ENCODE measurements at regions of chr6 and their contacts with region 1.

Region 1: DNA sequence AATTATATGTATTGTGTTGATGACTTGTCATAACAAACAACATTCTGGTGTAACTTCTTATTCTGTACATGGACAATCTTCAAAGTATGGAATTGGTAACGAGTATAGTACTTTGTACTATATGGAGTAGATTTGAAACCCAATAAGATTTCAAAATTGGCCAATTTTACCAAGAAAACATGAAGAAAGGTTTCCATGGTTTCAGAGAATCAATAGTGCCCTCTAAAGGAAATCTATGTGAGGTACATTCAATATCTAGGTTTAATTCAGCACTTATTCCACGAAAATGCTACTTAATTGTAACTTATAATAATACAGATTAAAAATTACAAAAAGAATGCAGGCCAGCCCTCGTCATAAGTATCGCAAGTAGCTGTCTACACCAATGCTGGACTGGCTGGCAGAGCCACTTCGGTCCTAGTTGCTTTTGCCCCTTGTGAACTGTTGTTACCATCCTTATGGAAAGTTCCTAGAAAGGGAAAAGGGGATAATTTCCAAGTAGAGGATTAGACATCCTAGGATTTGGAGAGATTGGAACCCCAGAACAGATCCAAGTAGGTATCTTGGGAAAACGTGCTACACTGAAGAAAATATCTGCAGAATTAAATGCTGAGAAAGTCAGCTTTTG is 70.9 kb downstream of the LCA5 start:
- DNase-seq: no peak
- H3K4me3 ChIP-seq: no peak overlapping the region
- H3K27ac ChIP-seq: no peak overlapping the region
- H3K4me1 ChIP-seq: no peaks in the 10 kb centered on the region
- H3K27me3 ChIP-seq: no peaks in the 10 kb centered on the region
- CTCF ChIP-seq: peak in 2 of 3 experiments; percentile 29 to 39; a peak in 2 of 4 replicates
- EP300 ChIP-seq: no peak
- POLR2A ChIP-seq: no peak
- RAD21 ChIP-seq: peak; percentile 64 to 75

Region 2: GRCh38 chr6:79377888-79378348 is 88.4 kb before region 1 on chr6:
- CTCF ChIA-PET with region 1: no interaction called
- POLR2A ChIA-PET with region 1: no interaction called
- DNase-seq: no peak
- H3K4me3 ChIP-seq: no peak overlapping the region
- H3K27ac ChIP-seq: no peak overlapping the region
- H3K4me1 ChIP-seq: no peaks in the 10 kb centered on the region; a peak in 1 of 7 replicates
- H3K27me3 ChIP-seq: no peaks in the 10 kb centered on the region
- CTCF ChIP-seq: no peak
- EP300 ChIP-seq: no peak
- POLR2A ChIP-seq: no peak
- RAD21 ChIP-seq: no peak

Region 3: GRCh38 chr6:79404681-79405156 is 61.6 kb before region 1 on chr6:
- CTCF ChIA-PET with region 1: interaction called, 19 read pairs
- POLR2A ChIA-PET with region 1: no interaction called
- DNase-seq: no peak
- H3K4me3 ChIP-seq: no peak overlapping the region
- H3K27ac ChIP-seq: no peak overlapping the region
- H3K4me1 ChIP-seq: peaks cover 0 to 4% (median 0%) of the 10 kb centered on the region in 4 experiments; a peak in 4 of 7 replicates
- H3K27me3 ChIP-seq: no peaks in the 10 kb centered on the region
- CTCF ChIP-seq: no peak
- EP300 ChIP-seq: no peak
- POLR2A ChIP-seq: no peak
- RAD21 ChIP-seq: no peak

Region 4: DNA sequence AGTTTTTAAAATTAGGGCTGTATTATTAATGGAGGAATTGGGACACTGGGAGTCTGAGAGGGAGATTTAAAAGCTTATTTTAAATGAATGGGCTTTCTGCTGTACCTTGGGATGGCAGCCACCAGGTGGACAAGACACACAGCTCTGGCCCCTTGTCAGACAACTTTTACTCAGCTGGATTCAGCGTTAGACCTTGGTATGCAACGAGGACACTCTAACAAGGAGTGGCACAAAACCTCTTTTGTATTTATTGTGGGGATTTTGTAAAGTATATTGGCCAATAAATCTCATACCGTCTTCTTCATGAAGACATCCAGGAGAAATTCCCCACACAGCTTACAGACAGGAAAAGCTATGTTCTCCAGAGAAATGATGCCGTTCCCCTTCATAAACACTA is 34.8 kb before region 1 on chr6:
- CTCF ChIA-PET with region 1: interaction called, 11 read pairs
- POLR2A ChIA-PET with region 1: no interaction called
- DNase-seq: no peak
- H3K4me3 ChIP-seq: no peak overlapping the region
- H3K27ac ChIP-seq: no peak overlapping the region
- H3K4me1 ChIP-seq: no peaks in the 10 kb centered on the region; a peak in 2 of 7 replicates
- H3K27me3 ChIP-seq: no peaks in the 10 kb centered on the region
- CTCF ChIP-seq: peak; percentile 32 to 54 (median 45)
- EP300 ChIP-seq: no peak
- POLR2A ChIP-seq: no peak
- RAD21 ChIP-seq: peak; percentile 59

Region 5: DNA sequence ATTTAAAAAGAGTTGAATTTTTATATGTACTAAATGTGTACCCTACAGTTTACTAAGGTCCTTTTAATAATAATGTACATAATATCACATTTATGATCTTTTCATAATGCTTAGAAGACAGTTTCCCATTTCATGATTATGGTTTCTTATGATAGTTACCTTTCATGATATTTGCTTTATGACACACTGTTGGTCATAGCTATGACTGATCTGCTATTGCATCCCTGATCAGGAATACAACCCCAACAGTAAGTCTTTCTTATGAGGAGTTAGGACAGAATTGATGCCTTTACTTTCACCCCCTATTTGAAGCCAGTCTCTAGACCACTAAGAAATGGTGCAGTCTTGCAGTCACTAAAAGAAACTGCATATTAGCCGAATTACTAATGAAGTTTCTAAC is 39.9 kb after region 1 on chr6:
- CTCF ChIA-PET with region 1: no interaction called
- POLR2A ChIA-PET with region 1: no interaction called
- DNase-seq: no peak
- H3K4me3 ChIP-seq: no peak overlapping the region
- H3K27ac ChIP-seq: no peak overlapping the region
- H3K4me1 ChIP-seq: no peaks in the 10 kb centered on the region
- H3K27me3 ChIP-seq: no peaks in the 10 kb centered on the region
- CTCF ChIP-seq: no peak
- EP300 ChIP-seq: no peak
- POLR2A ChIP-seq: no peak
- RAD21 ChIP-seq: no peak

Measured in H1 (cell line).